ENCODE measurements at regions of chrX and their contacts with region 1.

Region 1: GRCh38 chrX:74421036-74421739 is at the start of gene SLC16A2:
- DNase-seq: peak in 1 of 2 donors; percentile 83
- H3K4me3 ChIP-seq: peak within 1 kb of the TSS; percentile 46 to 63
- H3K27ac ChIP-seq: peak within 1 kb of the TSS; percentile 85 to 94
- H3K4me1 ChIP-seq: no peaks in the 10 kb centered on the region
- H3K27me3 ChIP-seq: no peaks in the 10 kb centered on the region
- CTCF ChIP-seq: no peak
- total RNA-seq, gene SLC16A2: 10.7 TPM

Region 2: DNA sequence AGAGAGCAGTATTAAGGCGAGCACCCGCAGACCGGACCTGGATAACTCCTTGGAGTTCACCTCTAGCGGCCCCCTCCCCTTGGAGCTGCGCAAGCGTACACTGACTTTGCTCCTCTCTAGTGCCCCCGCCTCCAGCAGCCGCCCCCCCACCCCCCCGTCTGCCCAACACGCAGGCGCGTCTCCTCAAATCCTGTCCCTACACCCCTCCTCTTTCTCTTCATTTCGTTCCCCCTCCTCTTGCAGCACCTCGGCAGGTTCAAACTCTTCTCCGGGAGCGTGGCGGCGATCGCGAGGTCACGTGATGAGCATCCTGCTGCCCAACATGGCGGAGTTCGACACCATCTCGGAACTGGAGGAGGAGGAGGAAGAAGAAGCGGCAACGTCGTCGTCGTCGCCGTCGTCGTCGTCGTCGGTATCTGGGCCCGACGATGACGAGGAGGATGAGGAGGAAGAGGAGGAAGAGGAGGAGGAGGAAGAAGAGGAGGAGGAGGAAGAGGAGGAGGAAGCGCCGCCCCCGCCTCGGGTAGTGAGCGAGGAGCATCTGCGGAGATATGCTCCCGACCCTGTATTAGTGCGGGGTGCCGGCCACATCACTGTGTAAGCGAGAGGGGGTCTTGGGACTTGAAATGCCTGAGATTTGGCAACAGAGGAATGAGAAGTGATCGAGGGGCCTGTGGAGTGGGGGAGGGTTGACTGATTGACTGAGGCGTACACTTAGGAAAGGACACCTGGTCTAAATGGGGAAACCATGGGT is 858.0 kb before region 1 on chrX and contains the start of gene CHIC1:
- intact Hi-C with region 1: loop called (anchors 10 kb)
- DNase-seq: peak; percentile 9 to 77
- H3K4me3 ChIP-seq: peak within 1 kb of the TSS; percentile 51 to 71
- H3K27ac ChIP-seq: peak within 1 kb of the TSS; percentile 84 to 91
- H3K4me1 ChIP-seq: no peaks in the 10 kb centered on the region
- H3K27me3 ChIP-seq: no peaks in the 10 kb centered on the region
- CTCF ChIP-seq: no peak
- total RNA-seq, gene CHIC1: 3.7 TPM

Region 3: GRCh38 chrX:74187211-74187610 is 234.0 kb before region 1 on chrX:
- intact Hi-C with region 1: no loop called
- DNase-seq: no peak
- H3K4me3 ChIP-seq: no peak overlapping the region
- H3K27ac ChIP-seq: no peak overlapping the region
- H3K4me1 ChIP-seq: no peaks in the 10 kb centered on the region
- H3K27me3 ChIP-seq: no peaks in the 10 kb centered on the region
- CTCF ChIP-seq: no peak

Region 4: GRCh38 chrX:74291964-74292807 is 129.0 kb before region 1 on chrX:
- intact Hi-C with region 1: loop called (anchors 5 kb)
- DNase-seq: peak; percentile 73 to 94
- H3K4me3 ChIP-seq: peak overlapping the region; percentile 57 to 71
- H3K27ac ChIP-seq: peak overlapping the region; percentile 73 to 87
- H3K4me1 ChIP-seq: no peaks in the 10 kb centered on the region
- H3K27me3 ChIP-seq: no peaks in the 10 kb centered on the region
- CTCF ChIP-seq: peak in 1 of 3 experiments; percentile 17

Region 5: DNA sequence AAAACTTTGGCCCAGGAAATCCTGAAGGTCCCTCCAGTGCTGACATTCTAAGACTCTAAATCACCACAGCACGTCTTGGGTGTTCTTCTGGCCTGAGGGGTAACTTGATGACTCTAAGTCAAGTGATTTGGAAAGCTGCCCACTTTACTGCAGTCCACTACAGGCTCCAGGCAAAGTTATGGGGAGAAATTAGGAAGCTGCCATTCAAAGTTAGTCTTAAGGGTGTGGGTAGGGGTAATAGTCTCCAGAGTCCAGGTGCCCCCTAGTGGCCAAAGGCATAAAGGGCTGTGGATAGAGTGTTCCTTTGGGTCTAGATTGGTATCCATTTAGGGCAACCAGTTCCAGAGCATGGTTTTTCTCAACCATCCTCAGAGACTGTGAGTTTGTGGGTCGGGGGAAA is 38.6 kb before region 1 on chrX:
- intact Hi-C with region 1: loop called (anchors 5 kb)
- DNase-seq: peak; percentile 11 to 82
- H3K4me3 ChIP-seq: no peak overlapping the region
- H3K27ac ChIP-seq: no peak overlapping the region
- H3K4me1 ChIP-seq: no peaks in the 10 kb centered on the region
- H3K27me3 ChIP-seq: no peaks in the 10 kb centered on the region
- CTCF ChIP-seq: peak; percentile 23 to 69 (median 64)

Region 6: DNA sequence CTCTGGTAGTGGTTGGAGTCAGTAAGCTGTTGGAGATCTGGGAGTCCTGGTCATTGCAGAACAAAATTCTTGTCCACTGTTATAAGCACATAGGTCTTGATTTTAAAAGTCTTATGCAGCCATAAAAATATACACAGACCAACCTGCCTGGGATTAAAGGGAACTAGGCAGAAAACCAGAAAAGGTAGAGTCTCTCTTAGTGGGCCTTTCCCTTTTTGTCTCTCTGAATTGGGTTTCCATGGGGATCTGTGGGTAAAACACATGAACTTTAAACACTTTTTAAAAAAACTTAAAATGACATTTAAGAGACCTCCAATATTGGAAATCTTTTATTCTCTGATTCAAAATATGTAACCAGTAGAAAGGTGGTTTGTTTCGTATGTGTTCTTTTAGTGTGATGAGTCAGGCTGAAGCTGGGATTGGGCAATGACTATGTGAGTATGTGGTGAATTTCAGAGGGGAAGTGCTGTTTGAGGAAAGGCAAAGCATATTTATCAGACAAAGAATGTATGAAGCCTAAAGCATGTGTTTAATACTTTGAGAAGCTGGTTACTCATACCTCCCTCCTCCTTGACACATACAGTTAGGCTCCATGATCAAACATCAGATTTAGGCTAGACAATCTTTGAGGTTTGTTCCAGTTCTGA is 29.7 kb after region 1 on chrX:
- intact Hi-C with region 1: loop called (anchors 2 kb)
- DNase-seq: no peak
- H3K4me3 ChIP-seq: no peak overlapping the region
- H3K27ac ChIP-seq: peak overlapping the region in 1 of 2 donors; percentile 22
- H3K4me1 ChIP-seq: no peaks in the 10 kb centered on the region
- H3K27me3 ChIP-seq: no peaks in the 10 kb centered on the region
- CTCF ChIP-seq: no peak

Region 7: DNA sequence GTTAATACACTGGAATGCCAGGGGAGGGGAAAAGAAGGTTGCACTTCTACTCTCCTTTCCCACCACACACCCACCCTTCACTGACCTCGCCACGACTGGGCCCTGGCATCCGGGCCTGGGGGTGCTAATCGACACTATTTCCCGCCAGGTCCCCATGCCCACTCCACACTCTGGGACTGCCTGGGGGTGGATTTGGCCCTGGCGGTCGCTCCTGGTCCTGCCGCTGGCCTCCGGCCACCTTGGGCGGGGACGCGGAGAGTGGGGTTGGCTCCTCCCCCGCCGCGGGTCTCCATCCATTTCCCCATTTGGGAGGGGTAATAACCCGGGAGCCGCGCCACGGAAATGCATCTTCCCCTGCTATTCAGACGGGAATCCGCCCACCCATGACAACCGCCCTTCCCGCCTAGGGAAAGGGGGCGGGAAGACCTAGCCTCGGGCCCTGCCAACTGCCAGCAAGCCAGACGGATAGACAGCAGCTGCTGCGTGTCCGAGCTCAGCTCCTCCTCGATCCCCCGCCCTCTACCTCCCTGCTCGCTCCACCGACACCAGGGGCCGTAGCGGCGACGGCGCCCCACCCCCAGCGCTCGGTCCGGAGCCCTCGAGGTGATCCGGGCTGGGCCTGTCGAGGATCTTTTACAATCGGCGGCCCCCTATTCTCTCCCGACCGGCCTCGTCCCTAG is 115.1 kb after region 1 on chrX:
- intact Hi-C with region 1: loop called (anchors 1 kb)
- DNase-seq: peak; percentile 43 to 90
- H3K4me3 ChIP-seq: peak overlapping the region; percentile 52 to 64
- H3K27ac ChIP-seq: peak overlapping the region; percentile 85 to 92
- H3K4me1 ChIP-seq: peaks cover 0 to 3% of the 10 kb centered on the region in 2 donors
- H3K27me3 ChIP-seq: no peaks in the 10 kb centered on the region
- CTCF ChIP-seq: peak; percentile 43 to 58 (median 48)

Region 8: GRCh38 chrX:74788545-74789086 is 367.4 kb after region 1 on chrX:
- intact Hi-C with region 1: no loop called
- DNase-seq: no peak
- H3K4me3 ChIP-seq: no peak overlapping the region
- H3K27ac ChIP-seq: no peak overlapping the region
- H3K4me1 ChIP-seq: no peaks in the 10 kb centered on the region
- H3K27me3 ChIP-seq: no peaks in the 10 kb centered on the region
- CTCF ChIP-seq: no peak

Measured in ascending aorta (tissue), 2 donors.